ENCODE measurements at regions of chr14 and their contacts with region 1.

Region 1: DNA sequence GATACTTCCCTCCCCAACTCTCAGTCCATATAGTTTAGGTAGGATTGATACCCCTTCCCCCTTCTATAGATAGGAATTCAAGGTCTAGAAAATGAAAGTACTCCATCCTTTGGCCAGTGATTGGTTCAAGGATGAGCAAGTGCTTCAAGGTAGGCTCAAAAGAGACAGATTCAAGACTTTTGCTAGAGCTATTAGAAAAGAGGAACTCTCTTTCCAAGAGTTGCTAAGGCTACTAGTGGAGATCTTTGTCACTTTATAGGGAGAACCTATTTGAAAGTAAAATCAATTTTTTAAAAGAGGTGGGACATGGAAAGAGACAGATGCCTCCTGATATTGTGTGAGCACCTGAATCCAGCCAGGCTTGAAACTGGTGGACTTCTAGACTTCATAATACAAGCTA is 17.5 kb downstream of the POLE2 start:
- DNase-seq: no peak

Region 2: DNA sequence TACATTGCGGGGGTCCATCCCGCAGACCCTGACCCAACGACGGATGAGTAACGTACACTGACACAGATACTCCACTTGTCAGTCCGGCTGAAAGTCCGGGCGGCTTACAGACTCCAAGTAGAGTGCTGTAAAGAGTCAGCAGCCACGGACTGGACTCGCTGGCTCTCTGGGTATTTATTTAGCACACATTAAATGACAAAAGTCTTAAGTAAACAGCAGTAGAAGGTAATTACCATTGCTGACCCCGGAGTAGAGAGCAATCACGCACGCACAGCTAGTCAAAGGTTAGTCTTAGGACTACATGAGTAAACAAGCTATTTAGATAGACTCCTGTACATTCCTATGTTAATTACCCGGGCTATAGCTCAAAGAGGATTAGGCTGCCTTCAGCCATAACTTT is 865.2 kb before region 1 on chr14:
- intact Hi-C with region 1: no loop called
- DNase-seq: no peak

Region 3: GRCh38 chr14:49732896-49733295 is 62.4 kb after region 1 on chr14:
- intact Hi-C with region 1: loop called in 1 of 2 experiments (anchors 2 kb)
- DNase-seq: no peak

Region 4: DNA sequence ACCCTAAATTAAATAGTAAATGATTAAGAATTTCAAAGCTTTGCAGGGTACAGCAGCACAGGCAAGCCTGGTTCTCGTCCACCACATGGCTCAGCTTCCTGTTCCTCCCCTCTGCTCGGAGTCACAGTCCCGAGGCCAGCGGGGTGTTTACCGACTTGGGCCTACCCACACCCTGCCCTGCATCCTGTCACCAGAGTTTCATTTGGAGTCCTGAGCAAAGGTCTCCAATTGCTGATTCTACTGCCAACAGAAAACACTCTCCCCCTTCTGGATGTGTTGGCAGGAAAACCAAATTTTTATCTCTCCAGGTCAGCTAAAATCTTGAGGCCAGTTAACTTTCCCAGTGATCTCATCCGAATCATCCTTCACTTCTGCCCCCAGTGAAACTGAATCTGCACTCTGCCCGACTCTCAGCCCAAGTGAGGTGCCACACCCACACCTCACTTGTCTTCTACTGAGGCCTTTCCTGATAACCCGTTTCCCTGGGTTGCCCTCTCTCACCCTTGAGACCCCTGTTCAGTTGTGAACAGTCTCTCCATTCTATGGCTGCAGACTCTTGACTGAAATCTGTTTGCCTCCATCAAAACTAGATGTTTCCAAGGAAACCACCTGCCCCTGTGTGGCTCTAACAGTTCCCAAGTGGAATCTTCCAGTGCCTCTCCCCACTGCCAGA is 374.7 kb after region 1 on chr14:
- intact Hi-C with region 1: no loop called
- DNase-seq: peak; percentile 95